GM12878 (cell line): ENCODE measurements at regions of chr9 and their contacts with region 1.

Region 1: DNA sequence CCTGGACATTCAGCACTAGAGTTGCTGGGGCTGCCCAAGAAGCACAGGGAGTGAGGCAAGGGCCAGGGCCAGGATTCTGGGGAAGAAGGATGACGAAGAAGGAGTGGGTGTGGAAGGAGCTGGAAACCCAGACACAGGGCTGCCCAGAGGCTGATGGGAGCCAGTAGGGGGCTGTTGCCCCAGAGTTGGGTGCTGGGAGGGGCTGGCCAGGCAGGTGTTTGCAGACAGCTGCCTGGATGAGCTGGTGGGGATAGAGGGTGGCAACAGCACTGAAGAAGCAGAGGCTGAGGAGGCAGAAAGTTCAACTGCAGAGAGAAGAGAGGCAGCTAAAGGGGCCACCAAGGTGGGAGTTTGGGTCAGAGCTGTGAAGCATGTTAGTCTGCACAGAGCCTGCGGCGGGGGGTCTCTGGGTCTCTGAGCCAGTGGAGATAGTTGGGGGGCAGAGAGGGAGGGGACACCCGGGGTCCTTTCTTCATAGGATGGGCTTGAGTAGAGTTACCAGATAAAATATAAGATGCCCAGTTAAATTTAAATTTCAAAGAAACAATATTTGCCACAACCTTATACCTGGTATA is 2.5 kb upstream of the AQP7 start:
- DNase-seq: no peak
- ATAC-seq: no peak
- H3K4me3 ChIP-seq: no peak overlapping the region
- H3K27ac ChIP-seq: no peak overlapping the region
- H3K4me1 ChIP-seq: no peaks in the 10 kb centered on the region
- H3K27me3 ChIP-seq: no peaks in the 10 kb centered on the region
- CTCF ChIP-seq: no peak
- EP300 ChIP-seq: no peak
- POLR2A ChIP-seq: no peak
- RAD21 ChIP-seq: no peak

Region 2: DNA sequence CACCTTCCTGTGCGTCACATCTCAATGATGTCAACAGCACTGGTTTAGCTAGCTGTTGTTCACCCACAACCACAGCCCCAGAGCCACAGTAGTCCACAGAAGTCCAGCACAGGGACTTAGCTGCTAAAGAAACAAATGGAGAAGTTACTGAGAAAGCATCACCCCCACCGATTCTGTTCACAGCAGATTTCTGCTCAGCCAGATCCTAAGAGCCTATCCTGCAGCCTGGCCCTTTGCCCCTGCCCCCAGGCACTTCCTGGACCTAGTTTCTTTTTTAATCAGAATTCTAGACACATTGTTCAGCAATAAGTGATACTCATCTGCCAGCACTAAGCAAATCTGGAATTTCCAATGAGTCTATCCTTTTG is 245.1 kb before region 1 on chr9:
- CTCF ChIA-PET with region 1: no interaction called
- POLR2A ChIA-PET with region 1: no interaction called
- RAD21 ChIA-PET with region 1: no interaction called
- SMC1A ChIA-PET with region 1: no interaction called
- in situ Hi-C with region 1: no loop called
- intact Hi-C with region 1: no loop called
- DNase-seq: no peak
- ATAC-seq: peak; percentile 60
- H3K4me3 ChIP-seq: peak overlapping the region; percentile 90
- H3K27ac ChIP-seq: peak overlapping the region; percentile 92
- H3K4me1 ChIP-seq: peaks cover 74% of the 10 kb centered on the region
- H3K27me3 ChIP-seq: no peaks in the 10 kb centered on the region
- CTCF ChIP-seq: no peak
- EP300 ChIP-seq: peak in 1 of 2 experiments; percentile 81; a peak in 3 of 4 replicates
- POLR2A ChIP-seq: peak; percentile 53; the same call in 1 of the 2 replicates
- RAD21 ChIP-seq: 0 out of 2 replicates have a peak, but pooled peaks have one; percentile 18

Region 3: GRCh38 chr9:33329117-33329563 is 75.7 kb before region 1 on chr9:
- CTCF ChIA-PET with region 1: no interaction called
- POLR2A ChIA-PET with region 1: no interaction called
- RAD21 ChIA-PET with region 1: no interaction called
- SMC1A ChIA-PET with region 1: no interaction called
- in situ Hi-C with region 1: no loop called
- intact Hi-C with region 1: no loop called
- DNase-seq: no peak
- ATAC-seq: no peak
- H3K4me3 ChIP-seq: no peak overlapping the region
- H3K27ac ChIP-seq: no peak overlapping the region
- H3K4me1 ChIP-seq: no peaks in the 10 kb centered on the region
- H3K27me3 ChIP-seq: no peaks in the 10 kb centered on the region
- CTCF ChIP-seq: no peak
- EP300 ChIP-seq: no peak
- POLR2A ChIP-seq: no peak
- RAD21 ChIP-seq: no peak

Region 4: GRCh38 chr9:33388110-33388994 is 16.5 kb before region 1 on chr9:
- CTCF ChIA-PET with region 1: no interaction called
- POLR2A ChIA-PET with region 1: no interaction called
- RAD21 ChIA-PET with region 1: no interaction called
- SMC1A ChIA-PET with region 1: no interaction called
- in situ Hi-C with region 1: no loop called
- intact Hi-C with region 1: no loop called
- DNase-seq: no peak
- ATAC-seq: no peak
- H3K4me3 ChIP-seq: no peak overlapping the region
- H3K27ac ChIP-seq: no peak overlapping the region
- H3K4me1 ChIP-seq: no peaks in the 10 kb centered on the region
- H3K27me3 ChIP-seq: no peaks in the 10 kb centered on the region
- CTCF ChIP-seq: no peak
- EP300 ChIP-seq: no peak
- POLR2A ChIP-seq: no peak
- RAD21 ChIP-seq: no peak

Region 5: DNA sequence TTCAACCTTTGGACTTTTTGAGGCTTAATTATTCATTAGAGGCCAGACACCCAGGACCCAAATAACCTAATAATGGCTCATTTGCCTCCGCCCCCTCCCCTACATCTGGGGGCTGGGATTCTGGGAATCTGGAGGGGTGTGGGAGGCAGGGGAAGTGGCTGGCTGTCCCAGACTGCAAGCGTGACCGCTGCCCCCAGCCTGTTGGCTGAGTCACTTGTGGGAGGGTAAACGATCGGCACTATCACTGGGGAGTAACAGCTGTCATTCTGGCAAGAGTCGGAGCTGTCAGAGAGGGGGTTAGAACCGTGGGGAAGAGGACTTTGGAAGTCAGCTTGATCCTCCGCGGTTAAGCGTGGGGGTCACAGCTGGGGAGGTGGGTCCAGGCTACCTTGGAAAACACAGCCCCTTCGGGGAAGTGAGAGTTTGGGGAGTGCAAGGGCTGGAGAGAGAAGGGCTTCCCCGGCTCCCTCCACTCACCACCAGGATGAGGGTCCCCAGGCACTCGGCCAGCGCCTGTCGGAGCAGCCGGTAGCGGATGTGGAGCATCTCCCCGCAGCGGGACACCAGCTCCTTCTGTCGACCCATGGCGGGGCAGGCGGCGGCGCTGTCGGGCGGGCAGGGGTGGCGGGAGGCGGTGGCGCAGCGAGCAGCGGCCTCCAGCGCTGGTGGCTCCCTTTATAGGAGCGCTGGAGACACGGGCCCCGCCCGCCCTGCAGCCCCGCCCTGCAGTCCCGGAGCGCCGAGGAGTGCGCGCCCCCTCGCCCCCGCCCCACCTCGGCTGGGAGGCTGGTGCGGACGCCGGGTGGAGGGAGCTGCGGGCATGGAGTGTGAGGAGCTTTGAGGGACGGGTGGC is 42.3 kb after region 1 on chr9 and contains the start of gene AQP3:
- CTCF ChIA-PET with region 1: interaction called, 113 read pairs
- POLR2A ChIA-PET with region 1: no interaction called
- RAD21 ChIA-PET with region 1: interaction called, 15 read pairs
- SMC1A ChIA-PET with region 1: interaction called, 8 read pairs
- in situ Hi-C with region 1: no loop called
- intact Hi-C with region 1: no loop called
- DNase-seq: no peak
- ATAC-seq: peak; percentile 82
- H3K4me3 ChIP-seq: peak within 1 kb of the TSS; percentile 40; the same call in 1 of the 2 replicates
- H3K27ac ChIP-seq: 0 out of 2 replicates have a peak within 1 kb of the TSS, but pooled peaks have one; percentile 20
- H3K4me1 ChIP-seq: peaks cover 31% of the 10 kb centered on the region
- H3K27me3 ChIP-seq: 0 out of 4 replicates have a peak, but pooled peaks cover 0 to 1% of the 10 kb centered on the region in 2 experiments
- CTCF ChIP-seq: peak; percentile 19 to 31 (median 20); a peak in 4 of 6 replicates
- EP300 ChIP-seq: no peak
- POLR2A ChIP-seq: peak; percentile 54; the same call in 1 of the 2 replicates
- RAD21 ChIP-seq: no peak
- polyA plus RNA-seq, gene AQP3: 0.60 to 0.71 TPM

Region 6: GRCh38 chr9:33466565-33467495 is 62.0 kb after region 1 on chr9:
- CTCF ChIA-PET with region 1: interaction called, 68 read pairs
- POLR2A ChIA-PET with region 1: no interaction called
- RAD21 ChIA-PET with region 1: interaction called, 39 read pairs
- SMC1A ChIA-PET with region 1: interaction called, 17 read pairs
- in situ Hi-C with region 1: no loop called
- intact Hi-C with region 1: loop called (anchors 1 kb)
- DNase-seq: no peak
- ATAC-seq: peak; percentile 91
- H3K4me3 ChIP-seq: no peak overlapping the region
- H3K27ac ChIP-seq: no peak overlapping the region
- H3K4me1 ChIP-seq: peaks cover under 1% of the 10 kb centered on the region
- H3K27me3 ChIP-seq: no peaks in the 10 kb centered on the region
- CTCF ChIP-seq: peak; percentile 81 to 99 (median 98)
- EP300 ChIP-seq: no peak
- POLR2A ChIP-seq: no peak
- RAD21 ChIP-seq: peak; percentile 84

Region 7: DNA sequence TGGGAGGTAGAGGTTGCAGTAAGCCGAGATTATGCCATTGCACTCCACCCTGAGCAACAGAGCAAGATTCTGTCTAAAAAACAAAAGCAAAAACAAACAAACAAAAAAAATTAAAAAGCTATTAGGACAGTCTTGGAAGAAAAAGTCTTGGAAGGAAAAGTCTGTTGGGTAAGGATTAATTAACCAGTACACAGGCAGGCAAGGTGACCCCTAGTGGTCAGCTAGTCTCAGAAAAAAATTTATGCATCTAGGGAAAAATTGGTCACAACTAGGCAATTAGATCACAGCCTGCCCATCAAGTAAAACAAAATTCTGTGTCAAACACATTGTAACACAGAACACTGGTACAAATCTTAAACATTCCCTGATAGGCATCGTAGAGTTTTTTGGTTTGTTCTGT is 112.5 kb after region 1 on chr9:
- CTCF ChIA-PET with region 1: no interaction called
- POLR2A ChIA-PET with region 1: no interaction called
- RAD21 ChIA-PET with region 1: interaction called, 3 read pairs
- SMC1A ChIA-PET with region 1: no interaction called
- in situ Hi-C with region 1: no loop called
- intact Hi-C with region 1: loop called (anchors 1 kb)
- DNase-seq: no peak
- ATAC-seq: peak; percentile 70
- H3K4me3 ChIP-seq: no peak overlapping the region
- H3K27ac ChIP-seq: no peak overlapping the region
- H3K4me1 ChIP-seq: no peaks in the 10 kb centered on the region
- H3K27me3 ChIP-seq: no peaks in the 10 kb centered on the region
- CTCF ChIP-seq: peak; percentile 45 to 50 (median 45)
- EP300 ChIP-seq: no peak
- POLR2A ChIP-seq: no peak
- RAD21 ChIP-seq: no peak

Region 8: GRCh38 chr9:33840381-33840780 is 435.5 kb after region 1 on chr9:
- CTCF ChIA-PET with region 1: no interaction called
- POLR2A ChIA-PET with region 1: no interaction called
- RAD21 ChIA-PET with region 1: no interaction called
- SMC1A ChIA-PET with region 1: no interaction called
- in situ Hi-C with region 1: no loop called
- intact Hi-C with region 1: no loop called
- DNase-seq: no peak
- ATAC-seq: no peak
- H3K4me3 ChIP-seq: no peak overlapping the region
- H3K27ac ChIP-seq: no peak overlapping the region
- H3K4me1 ChIP-seq: peaks cover 7% of the 10 kb centered on the region
- H3K27me3 ChIP-seq: no peaks in the 10 kb centered on the region
- CTCF ChIP-seq: no peak
- EP300 ChIP-seq: no peak
- POLR2A ChIP-seq: no peak
- RAD21 ChIP-seq: no peak